ENCODE measurements at regions of chr2 and their contacts with region 1.

Region 1: DNA sequence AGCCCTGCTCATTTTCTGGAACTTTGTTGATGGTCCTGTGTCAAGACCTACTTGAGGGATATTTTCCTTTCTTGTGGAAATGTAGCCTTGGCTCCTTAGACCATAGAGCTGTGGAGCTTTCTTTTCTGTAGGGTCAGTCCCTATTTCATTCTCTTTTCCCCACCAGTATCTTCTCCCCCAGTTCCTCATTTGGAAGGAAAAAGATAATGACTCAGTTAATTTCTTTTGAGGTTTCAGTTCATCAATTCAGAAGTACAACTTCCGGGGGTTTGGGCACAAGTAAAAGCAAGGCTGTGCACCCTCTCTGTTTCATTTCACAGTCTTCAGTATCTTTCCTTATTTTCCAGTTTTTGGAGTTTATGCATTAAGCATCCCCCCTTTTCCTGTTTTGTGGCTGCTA is 70.7 kb downstream of the CDC42EP3 start:
- DNase-seq: no peak
- H3K4me3 ChIP-seq: peak overlapping the region; percentile 19
- H3K4me3 Mint-ChIP-seq: peak overlapping the region; percentile 94 to 99 (median 97)
- H3K27ac ChIP-seq: peak overlapping the region; percentile 92
- H3K27ac Mint-ChIP-seq: peak overlapping the region; percentile 96 to 100 (median 98)
- H3K4me1 ChIP-seq: peaks cover 39% of the 10 kb centered on the region
- H3K4me1 Mint-ChIP-seq: peaks cover 63 to 73% (median 64%) of the 10 kb centered on the region in 3 donors
- H3K27me3 ChIP-seq: no peaks in the 10 kb centered on the region
- H3K27me3 Mint-ChIP-seq: no peaks in the 10 kb centered on the region

Region 2: GRCh38 chr2:37561615-37562569 is 38.8 kb before region 1 on chr2:
- CTCF ChIA-PET with region 1: no interaction called
- POLR2A ChIA-PET with region 1: no interaction called
- DNase-seq: no peak
- H3K4me3 ChIP-seq: no peak overlapping the region
- H3K4me3 Mint-ChIP-seq: no peak overlapping the region
- H3K27ac ChIP-seq: peak overlapping the region; percentile 25
- H3K27ac Mint-ChIP-seq: peak overlapping the region in 1 of 8 donors; percentile 95
- H3K4me1 ChIP-seq: peaks cover 4% of the 10 kb centered on the region
- H3K4me1 Mint-ChIP-seq: peaks cover 15 to 38% (median 28%) of the 10 kb centered on the region in 3 donors
- H3K27me3 ChIP-seq: no peaks in the 10 kb centered on the region
- H3K27me3 Mint-ChIP-seq: no peaks in the 10 kb centered on the region

Region 3: DNA sequence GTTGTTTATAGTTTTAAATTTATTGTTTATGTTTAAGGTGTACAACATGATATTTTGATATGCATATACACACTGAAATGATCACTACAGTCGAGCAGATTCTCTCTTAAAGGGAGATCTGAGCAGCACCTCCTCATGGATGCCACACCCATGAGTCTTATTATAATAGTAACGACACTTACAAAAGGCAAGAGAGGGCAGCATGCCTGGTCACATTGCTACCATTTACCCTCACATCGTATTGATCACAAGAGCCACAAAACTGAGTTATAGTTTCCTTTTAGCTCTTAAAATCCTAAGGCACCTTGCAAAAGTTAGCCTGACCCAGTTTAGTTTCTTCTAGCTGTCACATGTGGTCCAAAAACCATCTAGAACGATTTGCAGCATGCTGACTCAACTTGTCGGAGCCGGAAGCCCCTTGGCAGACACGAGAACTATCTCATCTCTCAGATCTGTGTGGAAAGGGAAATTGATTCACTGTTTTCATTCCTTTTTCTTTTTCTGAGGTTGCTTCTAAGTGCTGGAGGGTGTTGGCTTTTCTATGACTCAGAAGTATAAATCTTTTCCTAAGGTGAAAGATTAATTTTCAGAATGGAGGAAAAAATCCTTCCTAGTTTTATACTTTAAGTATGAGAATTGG is 14.6 kb before region 1 on chr2:
- CTCF ChIA-PET with region 1: interaction called, 21 read pairs
- POLR2A ChIA-PET with region 1: interaction called, 46 read pairs
- DNase-seq: peak; percentile 60 to 84 (median 71)
- H3K4me3 ChIP-seq: peak overlapping the region; percentile 29
- H3K4me3 Mint-ChIP-seq: peak overlapping the region; percentile 24 to 91 (median 79)
- H3K27ac ChIP-seq: peak overlapping the region; percentile 51
- H3K27ac Mint-ChIP-seq: peak overlapping the region; percentile 91 to 100 (median 95)
- H3K4me1 ChIP-seq: peaks cover 75% of the 10 kb centered on the region
- H3K4me1 Mint-ChIP-seq: peaks cover 90 to 97% (median 97%) of the 10 kb centered on the region in 3 donors
- H3K27me3 ChIP-seq: no peaks in the 10 kb centered on the region
- H3K27me3 Mint-ChIP-seq: no peaks in the 10 kb centered on the region

Region 4: DNA sequence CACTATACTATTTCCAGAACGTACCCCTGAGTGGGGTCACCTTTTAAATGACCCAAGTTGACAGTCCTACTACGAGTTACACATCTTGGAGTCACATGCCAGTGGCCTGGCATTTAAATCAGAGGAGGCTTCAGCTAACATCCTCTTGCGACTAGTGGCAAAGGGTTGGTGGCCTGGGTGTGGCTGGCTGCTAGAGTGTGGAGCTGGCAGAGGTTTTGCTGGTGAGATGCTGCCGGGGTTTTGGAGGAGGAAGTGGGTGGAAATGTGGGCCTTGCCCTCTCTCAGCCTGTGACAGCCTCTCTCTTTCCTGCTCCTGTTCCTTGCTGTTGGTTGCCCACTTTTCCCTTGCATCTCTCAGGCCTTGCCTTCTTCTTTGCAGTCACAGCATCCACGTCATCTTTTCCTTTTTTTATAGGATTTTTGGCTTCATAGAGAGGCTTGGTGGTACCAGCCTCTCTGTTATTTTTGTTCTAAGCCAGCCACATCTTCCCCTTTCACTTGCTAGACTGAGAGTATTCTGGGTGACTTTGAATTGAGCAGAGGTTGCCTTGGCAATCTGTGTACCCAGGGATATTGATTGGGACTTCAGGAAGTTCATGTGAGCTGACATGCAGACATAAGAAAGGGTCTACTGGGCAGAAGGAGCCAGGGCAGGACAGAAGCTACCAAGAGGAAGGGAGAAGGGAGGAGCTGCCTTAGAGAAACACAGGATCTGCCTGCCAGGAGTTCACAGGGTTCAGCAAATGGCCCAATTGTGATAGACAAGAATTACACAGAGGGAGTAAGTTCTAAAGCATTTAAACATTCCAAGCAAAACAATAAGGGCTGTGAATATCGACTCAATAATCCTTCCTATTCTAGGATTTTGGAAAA is 15.3 kb after region 1 on chr2:
- CTCF ChIA-PET with region 1: interaction called, 13 read pairs
- POLR2A ChIA-PET with region 1: interaction called, 15 read pairs
- DNase-seq: peak; percentile 49 to 80 (median 67)
- H3K4me3 ChIP-seq: no peak overlapping the region
- H3K4me3 Mint-ChIP-seq: peak overlapping the region; percentile 5 to 75 (median 67)
- H3K27ac ChIP-seq: peak overlapping the region; percentile 33
- H3K27ac Mint-ChIP-seq: peak overlapping the region; percentile 87 to 99 (median 95)
- H3K4me1 ChIP-seq: peaks cover 42% of the 10 kb centered on the region
- H3K4me1 Mint-ChIP-seq: peaks cover 81 to 92% (median 89%) of the 10 kb centered on the region in 3 donors
- H3K27me3 ChIP-seq: no peaks in the 10 kb centered on the region
- H3K27me3 Mint-ChIP-seq: no peaks in the 10 kb centered on the region

Region 5: DNA sequence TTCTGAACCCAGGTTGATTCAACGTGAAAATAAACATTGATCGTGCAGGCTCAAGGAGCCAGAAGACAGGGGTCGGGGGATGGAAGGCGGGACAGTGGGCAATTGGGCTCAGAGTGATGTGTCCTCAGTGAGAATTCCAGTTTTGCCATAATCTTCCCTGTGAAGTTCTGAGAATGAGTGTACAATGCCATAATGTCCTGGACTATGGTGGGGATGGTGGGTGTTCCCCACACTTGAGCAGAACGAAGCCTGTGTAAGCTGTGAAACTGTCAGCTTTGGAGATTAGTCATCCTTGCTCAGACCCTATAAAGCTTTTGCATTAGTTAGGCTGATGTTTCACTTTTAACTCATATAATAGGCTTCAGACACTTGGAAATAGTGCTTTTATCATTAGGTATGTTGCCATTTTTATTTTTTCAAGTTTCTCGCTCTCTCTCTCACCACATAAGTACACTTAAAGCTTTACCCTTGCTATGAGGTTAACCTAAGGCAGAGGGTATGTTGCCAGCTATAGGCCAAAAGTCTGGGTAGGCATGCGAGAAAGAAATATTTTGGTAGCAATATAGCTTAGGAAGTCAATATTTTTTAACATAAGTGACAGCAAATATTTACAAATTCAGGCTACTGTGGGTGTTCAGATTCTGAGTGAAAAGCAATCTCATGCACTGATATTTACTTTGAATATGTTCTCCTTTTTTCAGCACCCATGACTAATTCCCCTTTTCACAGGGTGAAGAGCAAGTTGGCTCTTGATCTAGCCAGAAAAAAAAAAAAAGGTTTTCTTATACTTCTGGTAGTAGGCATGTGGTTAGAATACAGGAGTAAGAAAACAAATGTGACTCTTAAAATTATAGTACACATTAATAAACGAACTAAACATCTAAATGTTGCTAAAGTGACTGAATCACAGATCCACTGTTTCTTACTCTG is 23.5 kb after region 1 on chr2:
- CTCF ChIA-PET with region 1: interaction called, 9 read pairs
- POLR2A ChIA-PET with region 1: interaction called, 24 read pairs
- DNase-seq: peak in 2 of 5 donors; percentile 37 to 55
- H3K4me3 ChIP-seq: no peak overlapping the region
- H3K4me3 Mint-ChIP-seq: peak overlapping the region; percentile 7 to 83 (median 76)
- H3K27ac ChIP-seq: peak overlapping the region; percentile 8
- H3K27ac Mint-ChIP-seq: peak overlapping the region; percentile 88 to 98 (median 96)
- H3K4me1 ChIP-seq: peaks cover 59% of the 10 kb centered on the region
- H3K4me1 Mint-ChIP-seq: peaks cover 74 to 91% (median 84%) of the 10 kb centered on the region in 3 donors
- H3K27me3 ChIP-seq: no peaks in the 10 kb centered on the region
- H3K27me3 Mint-ChIP-seq: no peaks in the 10 kb centered on the region

Region 6: DNA sequence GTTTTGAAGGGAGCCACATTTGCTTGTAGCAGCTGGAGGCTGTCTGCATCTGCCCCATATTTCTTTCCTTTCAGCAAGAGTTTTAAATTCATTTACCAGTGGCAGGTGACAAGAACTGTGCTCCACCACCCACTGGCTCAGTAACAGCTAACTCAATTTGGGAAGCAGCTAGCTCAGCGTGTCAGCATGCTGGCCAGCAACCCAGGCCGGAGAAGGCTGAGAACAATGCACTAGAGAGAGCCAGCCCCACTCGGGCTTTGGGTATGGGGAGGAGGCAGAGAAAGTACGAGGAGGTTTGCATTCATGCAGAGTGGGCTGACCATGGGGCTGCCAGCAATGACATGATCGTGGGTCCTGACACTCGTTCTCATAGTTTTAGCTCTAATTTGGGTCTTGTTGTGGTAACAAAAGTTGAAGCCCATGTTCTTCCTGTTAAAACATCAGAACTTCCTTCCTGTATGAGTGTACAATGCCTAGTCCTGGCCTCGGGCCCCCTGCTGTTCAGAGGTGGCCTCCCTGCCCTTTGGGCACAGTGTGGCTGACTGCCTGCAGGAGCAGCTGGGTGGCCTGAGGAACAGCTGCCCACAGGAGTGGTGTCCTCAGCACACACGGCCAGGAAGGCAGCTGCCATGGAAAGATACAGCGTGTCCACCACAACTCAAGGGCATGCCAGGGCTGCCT is 47.7 kb after region 1 on chr2:
- CTCF ChIA-PET with region 1: interaction called, 18 read pairs
- POLR2A ChIA-PET with region 1: interaction called, 21 read pairs
- DNase-seq: peak; percentile 29 to 73 (median 43)
- H3K4me3 ChIP-seq: peak overlapping the region; percentile 33
- H3K4me3 Mint-ChIP-seq: peak overlapping the region; percentile 63 to 88 (median 83)
- H3K27ac ChIP-seq: peak overlapping the region; percentile 49
- H3K27ac Mint-ChIP-seq: peak overlapping the region; percentile 92 to 98 (median 95)
- H3K4me1 ChIP-seq: peaks cover 82% of the 10 kb centered on the region
- H3K4me1 Mint-ChIP-seq: peaks cover 93 to 98% (median 98%) of the 10 kb centered on the region in 3 donors
- H3K27me3 ChIP-seq: no peaks in the 10 kb centered on the region
- H3K27me3 Mint-ChIP-seq: peaks cover 0 to 3% of the 10 kb centered on the region in 2 donors

Region 7: DNA sequence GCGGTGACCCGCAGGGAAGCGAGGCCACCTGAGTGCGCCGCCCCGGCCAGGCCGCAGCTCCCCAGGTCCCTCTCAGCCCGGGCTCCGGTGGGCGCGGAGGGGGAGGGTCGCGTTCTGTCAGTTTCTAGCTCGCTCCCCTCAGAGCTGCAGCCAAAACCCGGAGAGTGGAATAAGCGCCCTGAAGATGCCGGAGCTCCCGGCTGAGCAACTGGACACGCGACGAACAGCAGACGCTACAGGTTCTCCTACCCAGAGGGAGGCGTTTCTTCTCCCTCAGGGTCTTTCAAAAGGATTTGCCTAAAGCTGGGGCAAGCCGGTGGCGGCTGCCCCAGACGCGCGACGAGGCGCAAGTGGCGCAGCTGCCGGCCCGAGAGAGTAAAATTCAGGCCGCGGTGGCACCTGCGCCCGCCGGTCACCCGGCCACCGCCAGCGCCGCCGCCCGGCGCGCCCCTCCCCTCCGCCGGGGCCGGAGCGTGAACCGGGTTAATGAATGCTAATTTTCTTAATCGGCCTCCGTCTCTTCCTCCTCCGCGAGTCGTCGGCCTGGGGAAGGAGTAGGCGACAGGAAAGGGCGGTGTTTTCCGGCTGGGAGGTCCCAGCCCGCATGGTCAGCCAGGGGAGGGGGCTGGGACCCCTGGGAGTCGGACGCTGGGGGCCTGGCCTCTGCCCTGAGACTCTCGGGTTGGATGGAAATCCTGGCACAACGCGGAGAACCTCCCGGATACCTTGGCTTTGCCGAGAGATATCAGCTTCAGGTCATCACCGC is 71.6 kb after region 1 on chr2:
- CTCF ChIA-PET with region 1: interaction called, 3 read pairs
- POLR2A ChIA-PET with region 1: interaction called, 13 read pairs
- DNase-seq: peak; percentile 54 to 81 (median 64)
- H3K4me3 ChIP-seq: peak overlapping the region; percentile 74
- H3K4me3 Mint-ChIP-seq: peak overlapping the region; percentile 88 to 95 (median 91)
- H3K27ac ChIP-seq: peak overlapping the region; percentile 58
- H3K27ac Mint-ChIP-seq: peak overlapping the region; percentile 82 to 98 (median 91)
- H3K4me1 ChIP-seq: peaks cover 30% of the 10 kb centered on the region
- H3K4me1 Mint-ChIP-seq: peaks cover 42 to 52% (median 45%) of the 10 kb centered on the region in 3 donors
- H3K27me3 ChIP-seq: no peaks in the 10 kb centered on the region
- H3K27me3 Mint-ChIP-seq: no peaks in the 10 kb centered on the region

Region 8: DNA sequence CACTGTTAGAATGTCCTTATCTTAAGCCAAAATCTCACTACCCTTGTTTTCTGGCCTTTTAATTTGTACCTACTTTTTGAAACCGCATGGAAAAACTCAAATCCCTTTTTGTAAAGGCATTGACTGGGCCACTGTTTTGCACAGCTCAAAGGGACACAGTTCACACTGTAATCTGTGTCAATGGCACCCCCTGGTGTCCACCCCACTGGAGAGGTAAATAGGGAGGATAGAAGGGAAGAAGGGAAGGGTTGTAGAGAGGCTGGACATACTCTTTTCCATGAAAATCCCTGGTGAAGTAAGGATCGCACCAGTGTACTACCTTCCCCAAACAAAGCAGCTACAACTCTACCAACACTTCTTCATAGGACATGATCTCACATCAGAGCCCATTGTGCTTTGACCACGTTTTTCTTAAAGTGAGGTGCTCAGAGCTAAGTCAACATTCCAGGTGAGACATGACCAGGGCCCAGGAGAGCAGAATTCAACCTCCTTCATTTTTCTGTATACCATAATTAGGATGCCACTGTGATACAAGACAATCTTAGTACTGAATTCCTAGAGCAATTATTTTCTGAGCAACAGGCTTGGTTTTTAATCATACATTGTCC is 232.0 kb after region 1 on chr2:
- CTCF ChIA-PET with region 1: interaction called, 10 read pairs
- POLR2A ChIA-PET with region 1: no interaction called
- DNase-seq: peak; percentile 57 to 88 (median 76)
- H3K4me3 ChIP-seq: no peak overlapping the region
- H3K4me3 Mint-ChIP-seq: no peak overlapping the region
- H3K27ac ChIP-seq: no peak overlapping the region
- H3K27ac Mint-ChIP-seq: no peak overlapping the region
- H3K4me1 ChIP-seq: no peaks in the 10 kb centered on the region
- H3K4me1 Mint-ChIP-seq: peaks cover 5 to 14% (median 9%) of the 10 kb centered on the region in 3 donors
- H3K27me3 ChIP-seq: no peaks in the 10 kb centered on the region
- H3K27me3 Mint-ChIP-seq: peaks cover 0 to 3% of the 10 kb centered on the region in 2 donors